ENCODE measurements at regions of chr5 and their contacts with region 1.

Region 1: GRCh38 chr5:172984243-172984953 is 827 bp downstream of the ATP6V0E1 start:
- DNase-seq: peak; percentile 84
- ATAC-seq: peak; percentile 80
- H3K4me3 Mint-ChIP-seq: peak overlapping the region; percentile 99
- H3K27ac Mint-ChIP-seq: peak overlapping the region; percentile 99
- H3K4me1 Mint-ChIP-seq: peaks cover 27% of the 10 kb centered on the region
- H3K27me3 Mint-ChIP-seq: no peaks in the 10 kb centered on the region

Region 2: DNA sequence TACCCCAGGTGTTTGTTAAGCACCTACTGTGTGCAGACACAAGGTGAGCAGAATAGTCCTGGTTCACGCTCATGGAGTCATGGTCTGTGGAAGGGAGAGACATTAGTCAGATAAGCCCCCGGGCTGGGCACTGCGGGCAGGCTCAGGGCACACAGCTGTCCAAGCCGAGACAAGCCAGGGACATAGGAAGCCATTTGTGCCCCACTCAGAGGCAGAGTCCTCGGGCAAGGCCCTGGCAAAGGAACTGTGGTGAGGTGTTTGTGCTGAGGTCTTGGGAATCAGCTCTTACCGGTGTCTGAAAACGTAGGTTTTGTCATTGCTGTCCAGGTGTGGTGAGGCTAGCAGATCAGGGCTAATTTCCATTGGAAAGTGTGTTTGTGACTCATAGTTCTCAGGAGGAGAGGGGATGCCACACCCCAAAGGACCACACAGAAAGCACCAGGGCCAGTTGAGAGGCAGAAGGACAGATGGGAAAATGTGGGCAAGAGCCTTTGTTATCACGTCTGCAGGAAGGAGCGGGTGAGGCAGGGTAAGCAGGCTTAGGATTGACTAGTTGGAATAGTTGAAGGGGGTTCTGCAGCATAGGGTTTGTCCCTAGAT is 389.4 kb before region 1 on chr5:
- CTCF ChIA-PET with region 1: no interaction called
- POLR2A ChIA-PET with region 1: no interaction called
- DNase-seq: no peak
- ATAC-seq: no peak
- H3K4me3 Mint-ChIP-seq: no peak overlapping the region
- H3K27ac Mint-ChIP-seq: no peak overlapping the region
- H3K4me1 Mint-ChIP-seq: no peaks in the 10 kb centered on the region
- H3K27me3 Mint-ChIP-seq: peaks cover 3% of the 10 kb centered on the region

Region 3: GRCh38 chr5:172958331-172959046 is 25.9 kb before region 1 on chr5:
- CTCF ChIA-PET with region 1: interaction called, 18 read pairs
- POLR2A ChIA-PET with region 1: interaction called, 19 read pairs
- DNase-seq: peak; percentile 67
- ATAC-seq: peak; percentile 71
- H3K4me3 Mint-ChIP-seq: peak overlapping the region; percentile 92
- H3K27ac Mint-ChIP-seq: peak overlapping the region; percentile 95
- H3K4me1 Mint-ChIP-seq: peaks cover 32% of the 10 kb centered on the region
- H3K27me3 Mint-ChIP-seq: peaks cover 5% of the 10 kb centered on the region

Region 4: DNA sequence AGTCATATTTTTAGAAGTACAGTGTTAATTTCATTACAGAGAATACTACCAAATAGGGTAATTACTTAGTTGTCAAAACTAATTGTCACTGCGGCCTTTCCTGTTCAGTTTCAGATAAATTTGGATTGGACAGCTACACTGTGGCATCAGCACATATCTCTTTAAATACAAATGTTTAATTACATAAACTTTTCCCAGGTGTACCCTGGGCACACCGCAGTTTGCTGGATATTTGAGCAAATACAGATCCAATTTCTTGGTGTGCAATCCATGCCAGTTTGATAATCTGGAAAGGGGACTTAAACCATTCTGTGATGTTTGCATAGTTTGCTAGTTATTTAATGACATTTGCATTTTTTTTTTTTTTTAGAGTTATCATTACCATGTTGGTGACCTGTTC is 10.0 kb after region 1 on chr5:
- CTCF ChIA-PET with region 1: interaction called, 5 read pairs
- POLR2A ChIA-PET with region 1: interaction called, 17 read pairs
- DNase-seq: no peak
- ATAC-seq: no peak
- H3K4me3 Mint-ChIP-seq: no peak overlapping the region
- H3K27ac Mint-ChIP-seq: no peak overlapping the region
- H3K4me1 Mint-ChIP-seq: peaks cover 19% of the 10 kb centered on the region
- H3K27me3 Mint-ChIP-seq: no peaks in the 10 kb centered on the region

Region 5: GRCh38 chr5:173057062-173057924 is 72.9 kb after region 1 on chr5:
- CTCF ChIA-PET with region 1: interaction called, 10 read pairs
- POLR2A ChIA-PET with region 1: interaction called, 36 read pairs
- DNase-seq: peak; percentile 100
- ATAC-seq: peak; percentile 88
- H3K4me3 Mint-ChIP-seq: peak overlapping the region; percentile 93
- H3K27ac Mint-ChIP-seq: peak overlapping the region; percentile 95
- H3K4me1 Mint-ChIP-seq: peaks cover 42% of the 10 kb centered on the region
- H3K27me3 Mint-ChIP-seq: no peaks in the 10 kb centered on the region

Region 6: DNA sequence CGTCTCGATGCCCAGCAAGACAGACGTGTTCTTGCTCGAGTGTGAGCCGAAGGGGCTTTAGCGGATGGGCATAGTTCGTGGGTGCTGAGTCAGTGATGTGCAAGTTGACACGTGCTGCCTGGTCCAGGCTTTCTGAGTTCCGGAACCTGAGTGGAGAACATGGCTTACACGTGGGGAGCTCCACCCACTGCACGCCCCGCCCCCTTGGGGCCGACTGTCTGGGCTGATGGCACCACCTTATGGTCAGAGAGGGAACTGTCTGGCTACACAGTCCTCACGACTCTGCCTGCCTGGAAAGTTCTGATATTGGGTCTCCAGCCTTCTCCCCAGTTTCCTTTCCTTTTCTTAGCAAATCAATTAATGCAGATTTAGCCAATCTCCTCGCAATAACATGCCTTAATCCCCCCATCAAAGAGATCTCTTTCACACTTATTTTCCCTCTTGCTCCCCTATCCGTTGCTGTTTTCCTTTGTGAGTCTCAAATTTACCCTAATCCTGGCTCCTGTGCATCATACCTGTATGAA is 347.6 kb after region 1 on chr5:
- CTCF ChIA-PET with region 1: interaction called, 25 read pairs
- POLR2A ChIA-PET with region 1: interaction called, 6 read pairs
- DNase-seq: peak; percentile 93
- ATAC-seq: peak; percentile 69
- H3K4me3 Mint-ChIP-seq: no peak overlapping the region
- H3K27ac Mint-ChIP-seq: peak overlapping the region; percentile 44
- H3K4me1 Mint-ChIP-seq: peaks cover 37% of the 10 kb centered on the region
- H3K27me3 Mint-ChIP-seq: peaks cover 14% of the 10 kb centered on the region